Mammary epithelial cell (primary cell): ENCODE measurements at regions of chr18 and their contacts with region 1.

Region 1: GRCh38 chr18:9614401-9615279 is at the start of gene PPP4R1:
- DNase-seq: peak; percentile 76
- H3K4me3 ChIP-seq: peak within 1 kb of the TSS; percentile 50 to 99 (median 90)
- H3K27ac ChIP-seq: peak within 1 kb of the TSS; percentile 95
- H3K4me1 ChIP-seq: peaks cover 41% of the 10 kb centered on the region
- H3K27me3 ChIP-seq: no peaks in the 10 kb centered on the region
- CTCF ChIP-seq: no peak
- total RNA-seq, gene PPP4R1: 89.7 to 163 TPM

Region 2: DNA sequence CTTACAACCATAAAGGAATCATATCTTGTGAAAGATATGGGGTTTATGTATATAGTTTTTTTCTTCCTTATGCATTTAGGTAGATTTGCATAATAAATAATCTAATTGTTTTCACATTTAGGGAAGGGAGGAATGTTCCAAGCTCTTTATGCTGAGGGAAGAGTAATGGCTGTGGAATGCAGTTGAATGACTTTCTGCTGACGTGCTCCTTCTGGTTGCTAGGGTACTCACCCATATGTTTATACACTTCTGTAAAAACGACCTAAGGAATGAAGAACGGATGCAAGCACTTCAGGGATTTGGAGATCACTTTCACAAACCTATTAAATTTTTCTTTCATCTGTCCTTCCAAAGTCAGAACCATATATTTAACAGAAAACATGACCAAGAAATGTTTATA is 28.9 kb after region 1 on chr18:
- CTCF ChIA-PET with region 1: no interaction called
- dilution Hi-C with region 1: no loop called
- in situ Hi-C with region 1: no loop called
- intact Hi-C with region 1: loop called (anchors 1 kb)
- DNase-seq: peak; percentile 92
- H3K4me3 ChIP-seq: peak overlapping the region in 1 of 3 experiments; percentile 17
- H3K27ac ChIP-seq: peak overlapping the region; percentile 100
- H3K4me1 ChIP-seq: peaks cover 41% of the 10 kb centered on the region
- H3K27me3 ChIP-seq: no peaks in the 10 kb centered on the region
- CTCF ChIP-seq: no peak

Region 3: DNA sequence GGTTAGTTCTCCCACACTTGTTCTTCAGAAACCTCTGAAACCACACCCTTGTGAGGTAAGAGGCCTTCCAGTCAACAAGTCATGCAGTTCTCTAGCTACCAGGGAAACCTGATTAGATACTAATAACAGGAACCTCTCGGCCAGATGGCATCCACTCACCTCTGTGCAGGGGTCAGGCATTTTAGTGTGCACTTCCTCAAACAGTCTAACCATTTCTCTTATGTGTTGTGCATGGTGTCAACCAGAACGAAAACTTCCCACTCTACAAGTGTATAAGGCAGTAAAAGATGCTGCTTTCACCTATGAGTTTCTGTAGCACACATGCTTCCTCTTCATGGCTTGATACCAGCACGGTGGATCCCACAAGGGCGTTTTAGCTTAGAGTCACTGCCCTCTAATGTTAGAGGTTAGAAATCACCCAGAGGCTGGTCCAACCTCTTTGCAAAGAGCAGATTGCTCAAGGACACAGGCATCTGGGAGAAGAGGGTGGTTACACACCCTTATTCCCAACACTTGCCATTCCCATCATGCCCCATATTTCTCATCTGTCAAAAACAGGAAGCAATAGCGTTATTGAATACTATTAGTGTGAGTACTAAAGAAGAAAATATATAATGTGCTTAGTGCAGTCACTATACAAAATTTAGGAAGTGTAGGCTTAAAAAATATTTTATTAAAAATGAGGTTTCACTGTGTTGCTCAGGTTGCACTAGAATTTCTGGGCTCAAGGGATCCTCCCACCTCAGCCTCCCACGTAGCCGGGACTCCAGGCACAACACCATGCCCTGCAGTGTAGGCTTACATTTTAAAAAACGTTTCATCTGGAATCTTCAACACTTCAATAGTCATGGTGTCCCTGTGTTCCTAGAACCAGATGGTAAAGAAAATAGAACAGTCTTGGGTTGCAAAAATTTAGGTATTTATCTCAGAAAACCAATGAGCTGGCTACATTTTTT is 58.9 kb after region 1 on chr18:
- CTCF ChIA-PET with region 1: interaction called, 11 read pairs
- dilution Hi-C with region 1: no loop called
- in situ Hi-C with region 1: no loop called
- intact Hi-C with region 1: loop called (anchors 1 kb)
- DNase-seq: peak; percentile 99
- H3K4me3 ChIP-seq: no peak overlapping the region
- H3K27ac ChIP-seq: peak overlapping the region; percentile 95
- H3K4me1 ChIP-seq: peaks cover 33% of the 10 kb centered on the region
- H3K27me3 ChIP-seq: no peaks in the 10 kb centered on the region
- CTCF ChIP-seq: peak; percentile 27 to 51

Region 4: GRCh38 chr18:9722691-9723090 is 108.1 kb after region 1 on chr18:
- CTCF ChIA-PET with region 1: no interaction called
- dilution Hi-C with region 1: no loop called
- in situ Hi-C with region 1: no loop called
- intact Hi-C with region 1: loop called (anchors 1 kb)
- DNase-seq: peak; percentile 71
- H3K4me3 ChIP-seq: no peak overlapping the region
- H3K27ac ChIP-seq: no peak overlapping the region
- H3K4me1 ChIP-seq: peaks cover 19% of the 10 kb centered on the region
- H3K27me3 ChIP-seq: no peaks in the 10 kb centered on the region
- CTCF ChIP-seq: peak; percentile 75 to 88

Region 5: DNA sequence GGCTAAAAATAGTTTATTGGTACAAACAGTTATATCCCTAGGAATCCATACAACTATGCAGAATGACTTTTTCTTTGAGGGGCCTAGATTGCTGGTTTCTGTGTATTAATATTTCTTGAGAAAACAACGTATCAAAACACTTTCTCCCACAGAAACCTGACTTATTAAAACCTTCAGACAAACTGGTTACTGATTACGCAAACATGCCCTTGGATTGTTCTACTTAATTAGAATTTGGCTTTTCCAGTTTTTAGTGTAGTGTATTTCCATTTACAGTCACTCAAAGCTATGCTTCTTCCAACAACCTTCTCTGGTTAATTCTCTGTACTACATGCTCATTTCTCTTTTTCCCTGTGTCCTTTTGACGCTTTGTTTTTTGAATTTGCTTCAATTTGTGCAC is 319.2 kb after region 1 on chr18:
- CTCF ChIA-PET with region 1: no interaction called
- dilution Hi-C with region 1: no loop called
- in situ Hi-C with region 1: no loop called
- intact Hi-C with region 1: loop called (anchors 5 kb)
- DNase-seq: no peak
- H3K4me3 ChIP-seq: no peak overlapping the region
- H3K27ac ChIP-seq: no peak overlapping the region
- H3K4me1 ChIP-seq: peaks cover 24% of the 10 kb centered on the region
- H3K27me3 ChIP-seq: no peaks in the 10 kb centered on the region
- CTCF ChIP-seq: no peak